Activated naive CD4-positive, alpha-beta T cell treated with anti-CD3 and anti-CD28 coated beads, Interleukin-2, amount 10 ng/mL, durations not matched to agents 7 days and 5 days (primary cell): ENCODE measurements at regions of chr4 and their contacts with region 1.

Region 1: GRCh38 chr4:7843831-7844593 is 95.6 kb downstream of the AFAP1 start:
- DNase-seq: peak; percentile 80
- H3K4me3 Mint-ChIP-seq: no peak overlapping the region
- H3K27ac Mint-ChIP-seq: no peak overlapping the region
- H3K4me1 Mint-ChIP-seq: peaks cover 22% of the 10 kb centered on the region
- H3K27me3 Mint-ChIP-seq: no peaks in the 10 kb centered on the region

Region 2: DNA sequence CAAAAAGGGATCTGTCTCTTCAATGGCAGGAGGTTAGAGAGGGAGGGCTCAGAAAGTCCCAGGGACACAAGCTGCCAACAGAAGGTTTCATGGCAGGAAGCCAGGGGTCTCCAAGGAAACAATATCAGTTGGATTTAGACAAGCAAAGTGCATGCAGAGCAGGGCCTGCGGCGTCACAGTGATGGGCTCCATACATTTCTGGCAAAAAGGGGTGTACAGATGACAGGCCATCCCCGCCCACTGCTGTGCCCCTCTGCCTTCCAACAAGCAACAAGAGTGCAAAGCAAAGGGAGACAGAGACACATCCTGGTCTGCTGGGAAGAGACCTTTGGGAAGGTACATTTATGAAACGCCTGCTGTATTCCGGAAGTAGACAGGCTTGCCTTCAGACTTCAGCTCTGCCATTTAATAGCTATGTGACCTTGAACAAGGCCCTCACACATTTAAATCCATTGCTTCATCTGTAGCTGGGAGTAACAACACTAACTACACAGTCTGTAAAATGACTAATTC is 25.6 kb before region 1 on chr4:
- CTCF ChIA-PET with region 1: interaction called, 12 read pairs
- DNase-seq: no peak
- H3K4me3 Mint-ChIP-seq: no peak overlapping the region
- H3K27ac Mint-ChIP-seq: no peak overlapping the region
- H3K4me1 Mint-ChIP-seq: peaks cover 15% of the 10 kb centered on the region
- H3K27me3 Mint-ChIP-seq: no peaks in the 10 kb centered on the region

Region 3: DNA sequence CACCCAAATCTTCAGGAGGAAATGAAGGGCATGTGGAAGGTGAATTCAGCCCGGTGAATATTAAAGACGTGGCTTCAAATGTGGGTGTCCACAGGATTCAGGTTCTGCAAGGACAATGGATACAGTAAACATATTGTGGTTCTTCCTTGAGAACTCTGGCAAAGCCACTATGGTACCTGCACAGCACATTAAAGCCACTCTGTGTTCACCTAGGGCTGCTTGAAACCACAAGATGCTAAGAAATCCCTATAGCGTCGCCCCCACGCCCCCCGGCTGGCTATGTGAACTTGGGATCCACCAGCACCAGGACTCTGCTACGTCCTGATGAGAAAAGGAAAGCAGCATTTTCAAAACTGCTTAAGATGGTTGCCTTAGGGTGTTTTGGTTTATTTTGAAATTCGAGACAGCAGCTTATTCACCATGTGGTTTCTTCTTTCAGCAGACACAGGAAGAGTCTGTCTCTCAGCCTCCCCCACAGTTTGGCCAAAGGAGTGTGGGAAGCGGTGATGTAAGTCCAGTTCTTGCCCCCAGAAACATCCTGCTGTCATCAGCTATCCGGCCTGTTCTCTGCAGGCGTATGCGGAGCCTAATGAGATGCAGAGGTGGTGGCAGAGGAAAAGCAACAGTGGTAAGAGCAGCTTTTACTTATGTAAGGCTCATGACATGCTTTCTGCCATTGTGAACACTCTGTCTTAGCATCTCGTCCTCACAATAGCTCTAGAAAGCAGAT is 15.9 kb before region 1 on chr4:
- CTCF ChIA-PET with region 1: interaction called, 10 read pairs
- DNase-seq: peak; percentile 59
- H3K4me3 Mint-ChIP-seq: peak overlapping the region; percentile 8
- H3K27ac Mint-ChIP-seq: peak overlapping the region; percentile 84
- H3K4me1 Mint-ChIP-seq: peaks cover 54% of the 10 kb centered on the region
- H3K27me3 Mint-ChIP-seq: no peaks in the 10 kb centered on the region

Region 4: GRCh38 chr4:7854697-7855370 is 10.8 kb after region 1 on chr4:
- CTCF ChIA-PET with region 1: interaction called, 17 read pairs
- DNase-seq: peak; percentile 83
- H3K4me3 Mint-ChIP-seq: peak overlapping the region; percentile 40
- H3K27ac Mint-ChIP-seq: peak overlapping the region; percentile 98
- H3K4me1 Mint-ChIP-seq: peaks cover 89% of the 10 kb centered on the region
- H3K27me3 Mint-ChIP-seq: no peaks in the 10 kb centered on the region

Region 5: GRCh38 chr4:7876201-7876875 is 32.3 kb after region 1 on chr4:
- CTCF ChIA-PET with region 1: interaction called, 18 read pairs
- DNase-seq: peak; percentile 67
- H3K4me3 Mint-ChIP-seq: peak overlapping the region; percentile 52
- H3K27ac Mint-ChIP-seq: peak overlapping the region; percentile 92
- H3K4me1 Mint-ChIP-seq: peaks cover 70% of the 10 kb centered on the region
- H3K27me3 Mint-ChIP-seq: no peaks in the 10 kb centered on the region